ENCODE measurements at regions of chr2 and their contacts with region 1.

Region 1: GRCh38 chr2:15577071-15577735 is 14.5 kb upstream of the DDX1 start:
- DNase-seq: peak; percentile 88
- H3K4me3 ChIP-seq: no peak overlapping the region
- H3K27ac ChIP-seq: no peak overlapping the region
- H3K4me1 ChIP-seq: peaks cover 21% of the 10 kb centered on the region
- H3K27me3 ChIP-seq: no peaks in the 10 kb centered on the region
- CTCF ChIP-seq: peak; percentile 76 to 82
- POLR2A ChIP-seq: no peak

Region 2: GRCh38 chr2:14634201-14634884 is 942.9 kb before region 1 on chr2:
- CTCF ChIA-PET with region 1: interaction called, 16 read pairs
- POLR2A ChIA-PET with region 1: no interaction called
- dilution Hi-C with region 1: no loop called
- intact Hi-C with region 1: loop called (anchors 1 kb)
- DNase-seq: peak; percentile 51
- H3K4me3 ChIP-seq: peak overlapping the region in 1 of 3 experiments; percentile 12
- H3K27ac ChIP-seq: no peak overlapping the region
- H3K4me1 ChIP-seq: peaks cover 2% of the 10 kb centered on the region
- H3K27me3 ChIP-seq: peaks cover 31 to 41% of the 10 kb centered on the region in 2 experiments
- CTCF ChIP-seq: peak; percentile 25 to 71
- POLR2A ChIP-seq: no peak

Region 3: GRCh38 chr2:15169326-15170069 is 407.7 kb before region 1 on chr2:
- CTCF ChIA-PET with region 1: interaction called, 12 read pairs
- POLR2A ChIA-PET with region 1: no interaction called
- dilution Hi-C with region 1: no loop called
- intact Hi-C with region 1: loop called (anchors 1 kb)
- DNase-seq: peak; percentile 86
- H3K4me3 ChIP-seq: peak overlapping the region in 1 of 3 experiments; percentile 20
- H3K27ac ChIP-seq: peak overlapping the region; percentile 94
- H3K4me1 ChIP-seq: peaks cover 24% of the 10 kb centered on the region
- H3K27me3 ChIP-seq: no peaks in the 10 kb centered on the region
- CTCF ChIP-seq: no peak
- POLR2A ChIP-seq: no peak

Region 4: DNA sequence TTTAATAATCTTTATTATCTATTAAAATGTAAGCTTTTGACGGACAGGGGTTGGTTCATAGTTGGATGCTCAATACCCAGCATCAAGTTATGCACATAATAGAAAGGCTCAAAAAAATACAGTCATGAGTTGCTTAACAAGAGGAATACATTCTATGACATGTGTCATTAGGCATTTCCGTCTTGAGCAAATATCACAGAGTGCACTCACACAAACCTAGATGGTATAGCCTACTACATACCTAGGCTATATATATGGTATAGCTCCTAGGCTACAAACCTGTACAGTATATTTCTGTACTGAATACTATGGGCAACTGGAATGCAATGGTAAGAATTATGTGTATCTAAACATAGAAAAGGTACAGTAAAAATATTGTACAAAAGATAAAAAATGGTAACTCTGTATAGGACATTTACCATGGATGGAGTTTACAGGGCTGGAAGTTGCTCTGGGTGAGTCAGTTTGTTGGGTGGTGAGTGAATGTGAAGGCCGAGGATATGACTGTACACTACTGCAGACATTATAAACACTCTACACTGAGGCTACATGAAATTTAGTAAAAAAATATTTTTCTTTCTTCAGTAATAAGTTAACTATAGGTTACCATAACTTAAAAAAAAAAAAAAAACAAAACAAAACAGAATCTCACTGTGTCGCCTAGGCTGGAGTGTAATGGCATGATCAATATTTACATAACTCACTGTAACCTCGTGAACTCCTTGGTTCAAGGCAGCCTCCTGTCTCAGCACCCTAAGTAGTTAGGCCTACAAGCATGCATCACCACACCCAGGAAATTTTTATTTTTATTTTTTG is 217.3 kb before region 1 on chr2:
- CTCF ChIA-PET with region 1: no interaction called
- POLR2A ChIA-PET with region 1: no interaction called
- dilution Hi-C with region 1: no loop called
- intact Hi-C with region 1: loop called (anchors 1 kb)
- DNase-seq: peak; percentile 89
- H3K4me3 ChIP-seq: no peak overlapping the region
- H3K27ac ChIP-seq: peak overlapping the region; percentile 79
- H3K4me1 ChIP-seq: peaks cover 22% of the 10 kb centered on the region
- H3K27me3 ChIP-seq: no peaks in the 10 kb centered on the region
- CTCF ChIP-seq: no peak
- POLR2A ChIP-seq: no peak

Region 5: DNA sequence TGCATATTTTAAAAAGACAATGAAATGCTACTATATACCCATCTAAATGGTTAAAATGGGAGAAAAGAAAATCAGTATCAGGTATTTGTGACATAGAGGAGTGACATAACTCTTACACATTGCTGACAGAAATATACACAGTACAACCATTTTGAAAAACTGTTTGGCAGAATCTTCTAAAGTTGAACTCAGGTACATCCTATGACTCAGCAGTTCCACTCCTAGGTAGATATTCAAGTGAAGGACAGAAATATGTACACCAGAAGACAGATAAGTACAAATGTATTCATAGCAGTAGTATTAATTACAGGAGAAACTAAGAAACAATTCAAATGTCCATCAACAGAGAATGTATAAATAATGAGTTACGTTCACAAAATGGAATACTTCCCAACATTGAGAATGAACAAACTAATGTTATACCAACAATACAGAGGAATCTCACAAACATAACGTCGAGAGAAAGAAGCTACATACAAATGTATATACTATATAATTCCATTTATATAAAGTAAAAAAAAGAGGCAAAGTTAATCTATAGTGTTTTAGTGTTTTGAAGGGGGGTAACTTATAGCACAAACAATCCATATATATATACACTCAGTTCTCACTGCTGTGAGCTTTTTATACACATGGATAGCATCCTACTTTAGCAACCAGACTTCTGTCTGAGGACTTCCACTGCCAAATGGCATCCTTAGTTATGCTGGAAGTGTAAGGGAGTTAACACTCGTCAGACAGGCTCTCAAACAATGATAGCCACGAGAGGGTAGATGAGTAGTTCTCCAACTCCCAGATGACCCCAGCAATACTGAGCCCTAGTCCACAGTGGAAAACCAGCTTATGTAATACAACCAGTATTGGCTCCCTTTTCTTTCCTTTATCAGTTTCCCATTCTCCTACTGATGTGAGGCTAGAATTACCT is 188.5 kb before region 1 on chr2:
- CTCF ChIA-PET with region 1: no interaction called
- POLR2A ChIA-PET with region 1: no interaction called
- dilution Hi-C with region 1: no loop called
- intact Hi-C with region 1: no loop called
- DNase-seq: no peak
- H3K4me3 ChIP-seq: no peak overlapping the region
- H3K27ac ChIP-seq: no peak overlapping the region
- H3K4me1 ChIP-seq: no peaks in the 10 kb centered on the region
- H3K27me3 ChIP-seq: no peaks in the 10 kb centered on the region
- CTCF ChIP-seq: no peak
- POLR2A ChIP-seq: no peak

Region 6: GRCh38 chr2:15546297-15547098 is 30.7 kb before region 1 on chr2:
- CTCF ChIA-PET with region 1: interaction called, 12 read pairs
- POLR2A ChIA-PET with region 1: no interaction called
- dilution Hi-C with region 1: no loop called
- intact Hi-C with region 1: no loop called
- DNase-seq: no peak
- H3K4me3 ChIP-seq: no peak overlapping the region
- H3K27ac ChIP-seq: no peak overlapping the region
- H3K4me1 ChIP-seq: no peaks in the 10 kb centered on the region
- H3K27me3 ChIP-seq: no peaks in the 10 kb centered on the region
- CTCF ChIP-seq: no peak
- POLR2A ChIP-seq: no peak

Region 7: GRCh38 chr2:15591692-15592463 is 14.7 kb after region 1 on chr2 and contains the start of gene DDX1:
- CTCF ChIA-PET with region 1: interaction called, 23 read pairs
- POLR2A ChIA-PET with region 1: no interaction called
- dilution Hi-C with region 1: no loop called
- intact Hi-C with region 1: loop called (anchors 2 kb)
- DNase-seq: peak; percentile 82
- H3K4me3 ChIP-seq: peak within 1 kb of the TSS; percentile 74 to 99 (median 96)
- H3K27ac ChIP-seq: peak within 1 kb of the TSS; percentile 74
- H3K4me1 ChIP-seq: peaks cover 15% of the 10 kb centered on the region
- H3K27me3 ChIP-seq: no peaks in the 10 kb centered on the region
- CTCF ChIP-seq: no peak
- POLR2A ChIP-seq: peak; percentile 82
- total RNA-seq, gene DDX1: 117 and 124 TPM in 2 replicates